ENCODE measurements at regions of chr19 and their contacts with region 1.

Region 1: GRCh38 chr19:3710265-3710812 is 2.2 kb downstream of the TJP3 start:
- DNase-seq: peak in 1 of 2 experiments; percentile 65
- H3K4me3 ChIP-seq: no peak overlapping the region
- H3K27ac ChIP-seq: no peak overlapping the region
- H3K4me1 ChIP-seq: peaks cover 0 to 20% (median 14%) of the 10 kb centered on the region in 4 experiments; a peak in 4 of 7 replicates
- H3K27me3 ChIP-seq: peaks cover 0 to 3% (median 0%) of the 10 kb centered on the region in 4 experiments; a peak in 1 of 7 replicates
- CTCF ChIP-seq: no peak
- EP300 ChIP-seq: no peak
- POLR2A ChIP-seq: no peak
- RAD21 ChIP-seq: no peak

Region 2: DNA sequence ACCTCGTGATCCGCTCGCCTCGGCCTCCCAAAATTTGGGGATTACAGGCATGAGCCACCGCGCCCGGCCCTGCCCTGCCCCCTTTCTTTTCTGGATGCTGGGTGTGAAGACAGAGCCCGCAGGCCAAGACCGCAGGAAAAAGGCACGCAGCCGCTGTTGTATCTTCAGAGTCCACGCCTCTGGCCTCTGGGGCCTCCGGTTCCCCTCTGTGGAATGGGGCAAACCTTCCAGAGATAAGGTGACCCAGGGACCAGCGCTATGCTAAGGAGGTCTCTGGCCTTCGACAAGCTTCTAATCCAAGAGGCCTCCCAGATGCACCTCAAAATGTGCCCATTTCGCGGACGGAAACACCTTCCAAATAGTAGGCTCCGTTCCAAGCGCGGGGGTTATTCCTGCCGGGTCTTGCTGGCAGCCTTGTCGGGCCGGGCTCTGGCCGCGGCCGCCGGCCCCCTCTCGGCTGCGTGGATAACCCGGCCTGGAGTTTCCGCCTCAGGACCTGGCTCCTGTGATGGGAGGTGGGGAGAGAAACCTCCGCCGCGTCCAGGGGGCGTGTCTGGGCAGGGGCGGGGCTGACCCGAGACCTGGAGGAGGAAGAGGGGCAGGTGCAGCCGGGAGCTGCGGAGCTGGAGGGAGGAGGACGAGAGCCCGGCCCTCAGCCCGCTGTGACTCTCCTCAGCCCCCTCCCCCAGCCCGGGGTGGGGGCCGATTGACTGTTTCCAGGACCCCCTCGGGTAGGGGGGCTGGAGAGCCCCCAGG is 11.0 kb after region 1 on chr19:
- CTCF ChIA-PET with region 1: interaction called, 66 read pairs
- POLR2A ChIA-PET with region 1: interaction called, 7 read pairs
- DNase-seq: peak; percentile 90 to 100
- H3K4me3 ChIP-seq: peak overlapping the region; percentile 65 to 81 (median 70)
- H3K27ac ChIP-seq: no peak overlapping the region
- H3K4me1 ChIP-seq: peaks cover 0 to 16% (median 10%) of the 10 kb centered on the region in 4 experiments; a peak in 6 of 7 replicates
- H3K27me3 ChIP-seq: peaks cover 0 to 3% (median 0%) of the 10 kb centered on the region in 4 experiments; a peak in 2 of 7 replicates
- CTCF ChIP-seq: no peak
- EP300 ChIP-seq: peak in 1 of 2 experiments; percentile 94; a peak in 2 of 3 replicates
- POLR2A ChIP-seq: no peak
- RAD21 ChIP-seq: peak in 1 of 2 experiments; percentile 24; a peak in 1 of 4 replicates

Measured in H1 (cell line).